Activated CD4-positive, alpha-beta T cell treated with anti-CD3 and anti-CD28 coated beads for 36 hours (primary cell): ENCODE measurements at regions of chr1 and their contacts with region 1.

Region 1: GRCh38 chr1:101520302-101520701 is 283.5 kb downstream of the S1PR1 start:
- DNase-seq: peak; percentile 21
- ATAC-seq: peak; percentile 72
- H3K4me3 Mint-ChIP-seq: no peak overlapping the region
- H3K27ac Mint-ChIP-seq: no peak overlapping the region
- H3K4me1 Mint-ChIP-seq: peaks cover 7% of the 10 kb centered on the region
- H3K27me3 Mint-ChIP-seq: peaks cover 4% of the 10 kb centered on the region

Region 2: GRCh38 chr1:101567582-101568189 is 47.4 kb after region 1 on chr1:
- CTCF ChIA-PET with region 1: interaction called, 15 read pairs
- POLR2A ChIA-PET with region 1: no interaction called
- intact Hi-C with region 1: loop called (anchors 2 to 5 kb)
- DNase-seq: peak; percentile 68
- ATAC-seq: peak; percentile 81
- H3K4me3 Mint-ChIP-seq: no peak overlapping the region
- H3K27ac Mint-ChIP-seq: no peak overlapping the region
- H3K4me1 Mint-ChIP-seq: no peaks in the 10 kb centered on the region
- H3K27me3 Mint-ChIP-seq: peaks cover 9% of the 10 kb centered on the region

Region 3: GRCh38 chr1:102186536-102186935 is 666.2 kb after region 1 on chr1:
- CTCF ChIA-PET with region 1: no interaction called
- POLR2A ChIA-PET with region 1: no interaction called
- intact Hi-C with region 1: loop called in 1 of 2 experiments (anchors 10 kb)
- DNase-seq: no peak
- ATAC-seq: no peak
- H3K4me3 Mint-ChIP-seq: no peak overlapping the region
- H3K27ac Mint-ChIP-seq: no peak overlapping the region
- H3K4me1 Mint-ChIP-seq: no peaks in the 10 kb centered on the region
- H3K27me3 Mint-ChIP-seq: no peaks in the 10 kb centered on the region

Region 4: GRCh38 chr1:102434421-102434820 is 914.1 kb after region 1 on chr1:
- CTCF ChIA-PET with region 1: no interaction called
- POLR2A ChIA-PET with region 1: no interaction called
- intact Hi-C with region 1: loop called (anchors 1 to 10 kb)
- DNase-seq: peak; percentile 8
- ATAC-seq: no peak
- H3K4me3 Mint-ChIP-seq: no peak overlapping the region
- H3K27ac Mint-ChIP-seq: no peak overlapping the region
- H3K4me1 Mint-ChIP-seq: no peaks in the 10 kb centered on the region
- H3K27me3 Mint-ChIP-seq: no peaks in the 10 kb centered on the region